ENCODE measurements at regions of chr12 and their contacts with region 1.

Region 1: GRCh38 chr12:49288412-49288853 is 6.5 kb upstream of the PRPH start:
- DNase-seq: peak; percentile 61 to 75 (median 68)
- H3K4me3 ChIP-seq: no peak overlapping the region
- H3K4me3 Mint-ChIP-seq: no peak overlapping the region
- H3K27ac ChIP-seq: no peak overlapping the region
- H3K27ac Mint-ChIP-seq: peak overlapping the region in 1 of 7 donors; percentile 36
- H3K4me1 ChIP-seq: no peaks in the 10 kb centered on the region
- H3K4me1 Mint-ChIP-seq: peaks cover 0 to 4% (median 2%) of the 10 kb centered on the region in 4 donors
- H3K27me3 ChIP-seq: no peaks in the 10 kb centered on the region
- H3K27me3 Mint-ChIP-seq: peaks cover 20% of the 10 kb centered on the region in 2 donors

Region 2: GRCh38 chr12:49030714-49031552 is 257.5 kb before region 1 on chr12:
- CTCF ChIA-PET with region 1: no interaction called
- POLR2A ChIA-PET with region 1: no interaction called
- intact Hi-C with region 1: no loop called
- DNase-seq: no peak
- H3K4me3 ChIP-seq: no peak overlapping the region
- H3K4me3 Mint-ChIP-seq: peak overlapping the region in 1 of 8 donors; percentile 61
- H3K27ac ChIP-seq: no peak overlapping the region
- H3K27ac Mint-ChIP-seq: peak overlapping the region in 4 of 7 donors; percentile 31 to 75 (median 48)
- H3K4me1 ChIP-seq: no peaks in the 10 kb centered on the region
- H3K4me1 Mint-ChIP-seq: peaks cover 0 to 3% (median 0%) of the 10 kb centered on the region in 4 donors
- H3K27me3 ChIP-seq: no peaks in the 10 kb centered on the region
- H3K27me3 Mint-ChIP-seq: no peaks in the 10 kb centered on the region

Region 3: DNA sequence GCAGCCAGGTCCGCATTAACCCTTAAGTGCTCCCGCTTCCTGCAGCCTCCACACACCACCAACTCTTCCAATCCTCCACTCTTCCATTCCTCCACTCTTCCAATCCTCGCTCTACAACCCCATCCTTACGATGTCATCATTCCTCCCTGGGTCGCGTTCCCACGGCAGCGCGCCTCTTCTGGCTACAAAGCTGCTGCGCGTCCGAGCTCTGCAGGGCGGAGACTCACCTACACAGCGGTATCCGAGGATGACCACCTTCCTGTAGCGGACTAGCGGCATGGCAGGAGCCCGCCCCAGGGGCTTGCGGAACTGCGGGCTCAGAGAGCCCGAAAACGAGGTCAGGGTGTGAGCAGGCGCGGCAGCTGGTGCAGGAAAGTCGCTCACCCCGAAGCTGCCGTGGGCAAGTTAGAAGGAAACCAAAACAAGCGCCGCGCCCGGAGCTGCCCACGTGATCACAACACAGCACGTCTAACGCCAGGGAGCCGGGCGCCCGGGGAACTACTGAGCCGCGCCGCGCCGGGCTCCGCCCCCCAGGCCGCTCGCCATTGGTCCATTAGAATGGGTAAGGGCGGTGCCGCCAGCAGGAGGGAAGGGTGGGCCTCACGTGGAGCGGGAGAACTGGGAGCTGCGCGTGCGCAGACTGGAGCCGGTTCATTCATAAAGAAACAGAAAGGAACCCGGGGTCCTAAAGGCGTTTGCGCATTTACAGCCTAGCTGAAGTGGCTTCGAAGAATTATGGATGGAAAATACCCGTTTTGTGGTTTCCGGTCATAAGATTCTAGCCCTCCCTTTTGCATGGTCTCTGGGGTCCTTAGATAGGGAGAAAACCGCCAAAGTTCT is 218.7 kb before region 1 on chr12 and contains the start of gene RHEBL1:
- CTCF ChIA-PET with region 1: no interaction called
- POLR2A ChIA-PET with region 1: no interaction called
- intact Hi-C with region 1: no loop called
- DNase-seq: peak; percentile 96 to 98 (median 97)
- H3K4me3 ChIP-seq: peak within 1 kb of the TSS; percentile 69 to 77
- H3K4me3 Mint-ChIP-seq: peak within 1 kb of the TSS; percentile 92 to 99 (median 94)
- H3K27ac ChIP-seq: peak within 1 kb of the TSS; percentile 71
- H3K27ac Mint-ChIP-seq: peak within 1 kb of the TSS; percentile 87 to 98 (median 94)
- H3K4me1 ChIP-seq: peaks cover 13% of the 10 kb centered on the region
- H3K4me1 Mint-ChIP-seq: peaks cover 8 to 18% (median 15%) of the 10 kb centered on the region in 4 donors
- H3K27me3 ChIP-seq: no peaks in the 10 kb centered on the region
- H3K27me3 Mint-ChIP-seq: no peaks in the 10 kb centered on the region
- total RNA-seq, gene RHEBL1: 2.7 to 2.9 TPM

Region 4: GRCh38 chr12:49188914-49189367 is 99.5 kb before region 1 on chr12 and contains the start of gene TUBA1A:
- CTCF ChIA-PET with region 1: no interaction called
- POLR2A ChIA-PET with region 1: no interaction called
- intact Hi-C with region 1: no loop called
- DNase-seq: peak; percentile 96 to 99 (median 98)
- H3K4me3 ChIP-seq: peak within 1 kb of the TSS; percentile 84 to 97
- H3K4me3 Mint-ChIP-seq: peak within 1 kb of the TSS; percentile 95 to 99 (median 98)
- H3K27ac ChIP-seq: peak within 1 kb of the TSS; percentile 95
- H3K27ac Mint-ChIP-seq: peak within 1 kb of the TSS; percentile 96 to 100 (median 99)
- H3K4me1 ChIP-seq: peaks cover 17% of the 10 kb centered on the region
- H3K4me1 Mint-ChIP-seq: peaks cover 12 to 35% (median 25%) of the 10 kb centered on the region in 4 donors
- H3K27me3 ChIP-seq: no peaks in the 10 kb centered on the region
- H3K27me3 Mint-ChIP-seq: no peaks in the 10 kb centered on the region
- total RNA-seq, gene TUBA1A: 97.5 to 102 TPM

Region 5: DNA sequence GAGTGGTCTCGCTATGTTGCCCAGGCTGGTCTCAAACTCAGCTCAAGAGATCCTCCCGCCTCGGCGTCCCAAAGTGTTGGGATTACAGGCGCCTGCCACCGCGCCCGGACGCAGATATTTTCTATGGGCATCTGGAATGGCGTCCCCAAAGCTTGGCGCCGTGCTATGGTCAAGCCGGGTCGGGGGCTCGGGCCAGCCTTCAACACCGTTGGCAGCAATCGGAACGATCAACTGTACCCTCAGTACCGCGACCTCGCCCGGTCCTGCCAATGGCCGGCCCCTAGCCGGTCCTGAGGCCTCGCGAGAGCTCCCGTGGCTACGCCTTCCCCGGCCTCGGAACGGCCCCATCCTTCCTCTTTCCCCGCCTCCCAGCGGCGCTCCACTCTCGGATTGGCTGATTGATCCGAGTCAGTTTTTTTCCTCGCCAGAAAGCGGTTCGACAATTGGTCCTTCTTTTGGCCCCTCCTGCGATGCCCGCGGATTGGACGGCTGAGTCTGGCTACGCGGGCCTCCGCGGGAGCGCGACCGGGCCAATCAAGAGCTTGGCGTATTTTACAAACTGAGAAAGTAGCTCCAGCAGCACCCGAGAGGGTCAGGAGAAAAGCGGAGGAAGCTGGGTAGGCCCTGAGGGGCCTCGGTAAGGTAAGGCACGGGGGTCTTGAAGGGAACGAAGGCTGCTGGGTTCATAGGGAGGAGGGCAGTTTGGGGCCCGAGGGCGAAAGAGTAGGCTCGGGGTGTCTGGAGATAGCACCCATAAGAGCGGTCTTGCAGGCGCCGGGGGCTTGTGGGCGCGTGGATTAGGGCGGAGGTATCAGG is 34.5 kb after region 1 on chr12 and contains the start of gene TROAP:
- CTCF ChIA-PET with region 1: interaction called, 11 read pairs
- POLR2A ChIA-PET with region 1: no interaction called
- intact Hi-C with region 1: no loop called
- DNase-seq: peak; percentile 97 to 99 (median 97)
- H3K4me3 ChIP-seq: peak within 1 kb of the TSS; percentile 54 to 77
- H3K4me3 Mint-ChIP-seq: peak within 1 kb of the TSS; percentile 92 to 99 (median 96)
- H3K27ac ChIP-seq: peak within 1 kb of the TSS; percentile 51
- H3K27ac Mint-ChIP-seq: peak within 1 kb of the TSS; percentile 75 to 96 (median 91)
- H3K4me1 ChIP-seq: peaks cover 14% of the 10 kb centered on the region
- H3K4me1 Mint-ChIP-seq: peaks cover 14 to 24% (median 15%) of the 10 kb centered on the region in 4 donors
- H3K27me3 ChIP-seq: no peaks in the 10 kb centered on the region
- H3K27me3 Mint-ChIP-seq: no peaks in the 10 kb centered on the region
- total RNA-seq, gene TROAP: 0.26 to 0.80 TPM

Region 6: GRCh38 chr12:49336645-49337584 is 48.5 kb after region 1 on chr12 and contains the start of gene C1QL4:
- CTCF ChIA-PET with region 1: interaction called, 67 read pairs
- POLR2A ChIA-PET with region 1: interaction called, 6 read pairs
- intact Hi-C with region 1: loop called (anchors 1 kb)
- DNase-seq: peak; percentile 81 to 87 (median 81)
- H3K4me3 ChIP-seq: peak within 1 kb of the TSS in 1 of 2 donors; percentile 43
- H3K4me3 Mint-ChIP-seq: peak within 1 kb of the TSS; percentile 13 to 86 (median 70)
- H3K27ac ChIP-seq: no peak within 1 kb of the TSS
- H3K27ac Mint-ChIP-seq: peak within 1 kb of the TSS in 2 of 7 donors; percentile 24 to 52
- H3K4me1 ChIP-seq: peaks cover 22% of the 10 kb centered on the region
- H3K4me1 Mint-ChIP-seq: peaks cover 16 to 41% (median 23%) of the 10 kb centered on the region in 4 donors
- H3K27me3 ChIP-seq: peaks cover 37% of the 10 kb centered on the region
- H3K27me3 Mint-ChIP-seq: peaks cover 41 to 63% of the 10 kb centered on the region in 2 donors
- total RNA-seq, gene C1QL4: not detected

Region 7: GRCh38 chr12:49347384-49348237 is 59.2 kb after region 1 on chr12:
- CTCF ChIA-PET with region 1: interaction called, 70 read pairs
- POLR2A ChIA-PET with region 1: interaction called, 6 read pairs
- intact Hi-C with region 1: loop called (anchors 1 kb)
- DNase-seq: peak; percentile 70 to 81 (median 75)
- H3K4me3 ChIP-seq: peak overlapping the region; percentile 38 to 57
- H3K4me3 Mint-ChIP-seq: peak overlapping the region; percentile 81 to 92 (median 87)
- H3K27ac ChIP-seq: no peak overlapping the region
- H3K27ac Mint-ChIP-seq: peak overlapping the region in 2 of 7 donors; percentile 65 to 78
- H3K4me1 ChIP-seq: peaks cover 44% of the 10 kb centered on the region
- H3K4me1 Mint-ChIP-seq: peaks cover 15 to 44% (median 31%) of the 10 kb centered on the region in 4 donors
- H3K27me3 ChIP-seq: peaks cover 56% of the 10 kb centered on the region
- H3K27me3 Mint-ChIP-seq: peaks cover 25 to 46% of the 10 kb centered on the region in 2 donors

Region 8: GRCh38 chr12:49707128-49707811 is 418.8 kb after region 1 on chr12 and contains the start of gene FMNL3:
- CTCF ChIA-PET with region 1: no interaction called
- POLR2A ChIA-PET with region 1: no interaction called
- intact Hi-C with region 1: loop called (anchors 1 kb)
- DNase-seq: peak; percentile 97 to 99 (median 98)
- H3K4me3 ChIP-seq: peak within 1 kb of the TSS; percentile 66 to 71
- H3K4me3 Mint-ChIP-seq: peak within 1 kb of the TSS; percentile 90 to 95 (median 93)
- H3K27ac ChIP-seq: peak within 1 kb of the TSS; percentile 77
- H3K27ac Mint-ChIP-seq: peak within 1 kb of the TSS; percentile 87 to 95 (median 93)
- H3K4me1 ChIP-seq: peaks cover 40% of the 10 kb centered on the region
- H3K4me1 Mint-ChIP-seq: peaks cover 30 to 50% (median 39%) of the 10 kb centered on the region in 4 donors
- H3K27me3 ChIP-seq: no peaks in the 10 kb centered on the region
- H3K27me3 Mint-ChIP-seq: peaks cover 5 to 7% of the 10 kb centered on the region in 2 donors
- total RNA-seq, gene FMNL3: 27.9 to 28.1 TPM

Measured in CD4-positive, alpha-beta memory T cell (primary cell).